ENCODE measurements at regions of chr11 and their contacts with region 1.

Region 1: DNA sequence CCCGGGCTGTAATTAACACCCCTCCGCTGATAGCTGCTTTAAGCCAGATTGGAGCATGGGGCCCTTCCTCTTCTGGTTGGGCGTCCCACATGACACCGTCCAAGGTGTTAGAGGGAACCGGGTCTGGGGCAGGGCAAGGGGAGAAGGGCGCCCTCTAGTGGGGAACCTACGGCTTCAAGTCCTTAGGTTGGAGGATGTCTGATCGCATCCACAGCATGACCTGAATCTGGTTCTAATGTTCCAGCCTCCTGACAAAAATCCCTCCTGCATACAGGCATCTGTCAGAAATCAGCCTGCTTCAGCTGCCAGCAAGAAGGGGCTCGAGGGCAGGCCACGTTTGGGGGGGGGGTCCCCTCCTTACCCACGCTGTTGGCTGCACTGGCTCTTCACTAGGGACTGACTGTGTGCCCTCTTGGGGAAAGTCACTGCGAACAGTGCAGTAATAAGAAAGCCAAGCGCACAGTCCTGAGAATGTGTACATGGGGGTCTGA is 94.2 kb upstream of the TBCEL start:
- DNase-seq: peak; percentile 67 to 83 (median 75)
- ATAC-seq: peak; percentile 96
- H3K4me3 ChIP-seq: no peak overlapping the region
- H3K27ac ChIP-seq: no peak overlapping the region
- H3K4me1 ChIP-seq: no peaks in the 10 kb centered on the region; a peak in 1 of 5 replicates
- H3K27me3 ChIP-seq: peaks cover 2 to 18% of the 10 kb centered on the region in 2 experiments; a peak in 3 of 5 replicates
- CTCF ChIP-seq: peak; percentile 56 to 74 (median 61)
- EP300 ChIP-seq: no peak
- POLR2A ChIP-seq: no peak
- RAD21 ChIP-seq: peak; percentile 10 to 51; a peak in 1 of 4 replicates

Region 2: GRCh38 chr11:121194731-121195596 is 265.3 kb after region 1 on chr11:
- CTCF ChIA-PET with region 1: no interaction called
- POLR2A ChIA-PET with region 1: no interaction called
- in situ Hi-C with region 1: no loop called
- intact Hi-C with region 1: loop called (anchors 5 kb)
- DNase-seq: peak; percentile 46 to 76 (median 58)
- ATAC-seq: peak; percentile 95
- H3K4me3 ChIP-seq: no peak overlapping the region
- H3K27ac ChIP-seq: no peak overlapping the region
- H3K4me1 ChIP-seq: no peaks in the 10 kb centered on the region
- H3K27me3 ChIP-seq: peaks cover 0 to 2% of the 10 kb centered on the region in 2 experiments; a peak in 2 of 5 replicates
- CTCF ChIP-seq: peak; percentile 62 to 78 (median 71)
- EP300 ChIP-seq: no peak
- POLR2A ChIP-seq: no peak
- RAD21 ChIP-seq: peak; percentile 49 to 72

Measured in K562 (cell line).